Activated CD4-positive, alpha-beta T cell treated with anti-CD3 and anti-CD28 coated beads for 36 hours (primary cell): ENCODE measurements at regions of chr1 and their contacts with region 1.

Region 1: GRCh38 chr1:107936498-107937481 is 28.2 kb downstream of the VAV3 start:
- DNase-seq: peak; percentile 71
- ATAC-seq: peak; percentile 56
- H3K4me3 Mint-ChIP-seq: no peak overlapping the region
- H3K27ac Mint-ChIP-seq: peak overlapping the region; percentile 80
- H3K4me1 Mint-ChIP-seq: peaks cover 66% of the 10 kb centered on the region
- H3K27me3 Mint-ChIP-seq: no peaks in the 10 kb centered on the region

Region 2: GRCh38 chr1:107820805-107821204 is 116.0 kb before region 1 on chr1:
- CTCF ChIA-PET with region 1: no interaction called
- POLR2A ChIA-PET with region 1: interaction called, 3 read pairs
- intact Hi-C with region 1: loop called (anchors 1 kb)
- DNase-seq: no peak
- ATAC-seq: peak; percentile 81
- H3K4me3 Mint-ChIP-seq: no peak overlapping the region
- H3K27ac Mint-ChIP-seq: peak overlapping the region; percentile 93
- H3K4me1 Mint-ChIP-seq: peaks cover 38% of the 10 kb centered on the region
- H3K27me3 Mint-ChIP-seq: no peaks in the 10 kb centered on the region

Region 3: DNA sequence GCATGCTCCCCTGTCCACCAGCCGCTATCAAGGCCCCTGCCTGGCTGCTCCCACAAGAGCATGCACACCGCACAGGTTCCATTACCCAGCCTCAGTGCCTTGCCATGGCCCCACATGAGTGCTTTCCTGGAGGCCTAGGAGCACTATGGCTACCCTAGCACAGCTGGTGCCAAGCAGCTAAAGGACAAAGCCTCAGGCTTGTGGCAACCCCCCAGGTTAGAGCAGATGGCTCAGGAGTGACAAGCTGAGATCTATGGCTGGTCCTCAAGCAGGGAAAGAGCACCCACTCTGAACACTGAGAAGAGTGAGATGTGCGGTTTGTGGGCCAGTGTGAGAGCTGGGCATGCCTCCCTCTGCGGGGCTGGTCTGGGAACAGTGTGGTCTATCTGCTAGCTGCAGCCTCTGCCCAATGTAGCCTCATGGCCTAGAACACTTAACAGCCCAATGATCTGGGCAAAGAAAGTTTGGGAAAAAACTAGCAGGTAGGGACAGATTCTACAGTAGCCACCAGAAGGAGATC is 101.6 kb before region 1 on chr1:
- CTCF ChIA-PET with region 1: no interaction called
- POLR2A ChIA-PET with region 1: no interaction called
- intact Hi-C with region 1: no loop called
- DNase-seq: no peak
- ATAC-seq: no peak
- H3K4me3 Mint-ChIP-seq: no peak overlapping the region
- H3K27ac Mint-ChIP-seq: no peak overlapping the region
- H3K4me1 Mint-ChIP-seq: peaks cover 22% of the 10 kb centered on the region
- H3K27me3 Mint-ChIP-seq: no peaks in the 10 kb centered on the region

Region 4: GRCh38 chr1:107883562-107883961 is 53.2 kb before region 1 on chr1:
- CTCF ChIA-PET with region 1: no interaction called
- POLR2A ChIA-PET with region 1: no interaction called
- intact Hi-C with region 1: loop called in 1 of 2 experiments (anchors 1 kb)
- DNase-seq: no peak
- ATAC-seq: no peak
- H3K4me3 Mint-ChIP-seq: no peak overlapping the region
- H3K27ac Mint-ChIP-seq: no peak overlapping the region
- H3K4me1 Mint-ChIP-seq: peaks cover 13% of the 10 kb centered on the region
- H3K27me3 Mint-ChIP-seq: no peaks in the 10 kb centered on the region

Region 5: DNA sequence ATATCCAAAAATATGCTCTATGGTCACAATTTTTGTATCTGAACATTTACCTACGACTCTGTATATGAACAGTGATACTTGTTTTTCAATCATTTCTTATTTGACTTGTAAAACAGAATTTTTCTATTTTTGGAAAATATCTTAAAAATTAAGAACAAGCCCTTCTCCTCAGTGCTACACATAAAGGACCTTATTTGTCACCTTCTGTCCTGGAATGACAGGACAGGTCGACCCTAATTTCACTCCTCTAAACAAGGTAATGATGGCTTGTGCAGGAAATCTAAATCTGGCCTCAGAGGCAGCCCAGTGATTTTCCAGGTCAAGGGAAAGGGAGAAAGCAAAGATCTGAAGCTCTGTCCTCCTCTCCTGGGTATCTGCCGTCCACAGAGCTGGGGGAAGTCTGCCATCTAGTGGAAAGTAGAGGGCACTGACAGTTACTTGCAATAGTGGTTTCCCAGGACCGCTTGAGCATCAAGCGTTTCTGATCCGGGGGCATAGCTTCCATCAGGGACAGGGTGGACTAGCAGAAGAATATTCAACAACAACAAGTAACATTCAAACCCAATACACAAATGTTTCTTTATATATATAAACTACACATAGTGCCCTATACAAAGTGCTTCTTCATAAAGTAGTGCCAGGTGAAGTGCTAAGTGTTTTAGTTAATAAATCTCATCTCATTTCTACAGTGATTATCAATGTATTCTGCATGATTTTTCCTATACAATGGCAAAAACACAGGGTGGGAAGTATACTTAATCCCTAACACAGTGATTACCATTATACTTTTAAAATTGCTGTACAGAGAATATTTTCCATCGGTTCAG is 188.7 kb after region 1 on chr1:
- CTCF ChIA-PET with region 1: interaction called, 13 read pairs
- POLR2A ChIA-PET with region 1: no interaction called
- intact Hi-C with region 1: no loop called
- DNase-seq: peak; percentile 77
- ATAC-seq: peak; percentile 94
- H3K4me3 Mint-ChIP-seq: no peak overlapping the region
- H3K27ac Mint-ChIP-seq: no peak overlapping the region
- H3K4me1 Mint-ChIP-seq: peaks cover 2% of the 10 kb centered on the region
- H3K27me3 Mint-ChIP-seq: no peaks in the 10 kb centered on the region

Region 6: GRCh38 chr1:108785264-108785663 is 848.5 kb after region 1 on chr1:
- CTCF ChIA-PET with region 1: no interaction called
- POLR2A ChIA-PET with region 1: no interaction called
- intact Hi-C with region 1: no loop called
- DNase-seq: no peak
- ATAC-seq: no peak
- H3K4me3 Mint-ChIP-seq: no peak overlapping the region
- H3K27ac Mint-ChIP-seq: no peak overlapping the region
- H3K4me1 Mint-ChIP-seq: no peaks in the 10 kb centered on the region
- H3K27me3 Mint-ChIP-seq: no peaks in the 10 kb centered on the region